ENCODE measurements at regions of chr19 and their contacts with region 1.

Region 1: GRCh38 chr19:18192673-18193387 is at the start of gene MPV17L2:
- DNase-seq: peak; percentile 100
- H3K4me3 ChIP-seq: peak within 1 kb of the TSS; percentile 78 to 85 (median 82)
- H3K27ac ChIP-seq: peak within 1 kb of the TSS; percentile 56
- H3K4me1 ChIP-seq: peaks cover 14% of the 10 kb centered on the region
- H3K27me3 ChIP-seq: no peaks in the 10 kb centered on the region
- CTCF ChIP-seq: no peak
- POLR2A ChIP-seq: peak; percentile 66
- total RNA-seq, gene MPV17L2: 13.8 and 16.1 TPM in 2 replicates

Region 2: DNA sequence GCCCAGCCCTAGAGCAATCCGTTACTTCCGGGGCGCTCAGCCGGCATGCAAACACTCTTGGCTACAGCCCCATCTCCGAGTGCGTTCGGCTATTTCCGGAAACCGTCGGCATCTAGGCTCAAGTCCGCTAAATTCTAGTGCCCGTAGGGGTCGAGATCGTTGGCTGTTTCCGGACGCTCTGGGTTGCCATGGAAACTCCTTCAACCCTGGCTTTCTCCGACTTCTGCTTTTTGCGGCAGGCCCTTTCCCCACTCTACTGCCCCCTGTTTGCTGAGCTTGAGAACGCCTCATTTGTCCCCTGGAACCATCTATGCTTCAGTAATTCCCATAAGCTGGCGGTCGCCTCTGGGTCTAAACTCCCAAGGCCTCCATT is 40.4 kb before region 1 on chr19:
- CTCF ChIA-PET with region 1: no interaction called
- POLR2A ChIA-PET with region 1: no interaction called
- dilution Hi-C with region 1: no loop called
- intact Hi-C with region 1: loop called (anchors 2 kb)
- DNase-seq: peak; percentile 97
- H3K4me3 ChIP-seq: peak overlapping the region in 2 of 3 experiments; percentile 38 to 68
- H3K27ac ChIP-seq: peak overlapping the region; percentile 88
- H3K4me1 ChIP-seq: peaks cover 21% of the 10 kb centered on the region
- H3K27me3 ChIP-seq: no peaks in the 10 kb centered on the region
- CTCF ChIP-seq: peak; percentile 70 to 83
- POLR2A ChIP-seq: peak; percentile 84

Region 3: DNA sequence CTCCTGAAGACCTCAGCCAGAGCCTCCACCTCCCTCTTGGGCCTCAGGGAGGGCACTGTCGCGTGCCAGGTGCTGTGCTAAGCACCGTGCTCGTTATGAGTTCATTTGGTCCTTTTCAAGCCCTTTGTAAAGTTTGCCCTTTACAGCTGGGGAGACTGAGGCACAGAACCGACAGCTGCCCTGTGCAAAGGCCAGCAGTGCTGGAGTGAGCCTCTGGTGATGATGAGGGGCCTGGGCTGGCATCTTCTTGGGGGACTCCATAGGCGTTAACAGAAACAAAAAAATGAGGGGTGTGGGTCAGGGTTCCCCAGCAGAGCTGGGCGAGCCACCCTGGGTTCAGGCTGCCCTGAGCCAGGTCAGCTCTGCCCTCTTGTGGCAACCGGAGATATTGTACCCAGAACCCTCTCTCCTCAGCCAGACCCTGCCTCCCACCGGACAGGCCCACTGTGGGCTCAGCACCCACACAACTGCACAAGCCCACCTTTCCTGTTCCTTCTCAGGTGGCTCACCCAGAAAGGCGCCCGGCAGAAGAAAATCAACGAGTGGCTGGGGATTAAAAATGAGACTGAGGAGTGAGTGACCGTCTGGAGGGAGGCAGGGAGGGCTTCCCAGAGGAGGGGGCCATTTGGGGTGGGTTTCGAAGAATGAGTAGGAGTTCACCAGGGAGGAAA is 24.7 kb before region 1 on chr19:
- CTCF ChIA-PET with region 1: interaction called, 10 read pairs
- POLR2A ChIA-PET with region 1: no interaction called
- dilution Hi-C with region 1: no loop called
- intact Hi-C with region 1: no loop called
- DNase-seq: peak; percentile 24
- H3K4me3 ChIP-seq: no peak overlapping the region
- H3K27ac ChIP-seq: no peak overlapping the region
- H3K4me1 ChIP-seq: no peaks in the 10 kb centered on the region
- H3K27me3 ChIP-seq: no peaks in the 10 kb centered on the region
- CTCF ChIP-seq: peak; percentile 63 to 84
- POLR2A ChIP-seq: no peak

Region 4: DNA sequence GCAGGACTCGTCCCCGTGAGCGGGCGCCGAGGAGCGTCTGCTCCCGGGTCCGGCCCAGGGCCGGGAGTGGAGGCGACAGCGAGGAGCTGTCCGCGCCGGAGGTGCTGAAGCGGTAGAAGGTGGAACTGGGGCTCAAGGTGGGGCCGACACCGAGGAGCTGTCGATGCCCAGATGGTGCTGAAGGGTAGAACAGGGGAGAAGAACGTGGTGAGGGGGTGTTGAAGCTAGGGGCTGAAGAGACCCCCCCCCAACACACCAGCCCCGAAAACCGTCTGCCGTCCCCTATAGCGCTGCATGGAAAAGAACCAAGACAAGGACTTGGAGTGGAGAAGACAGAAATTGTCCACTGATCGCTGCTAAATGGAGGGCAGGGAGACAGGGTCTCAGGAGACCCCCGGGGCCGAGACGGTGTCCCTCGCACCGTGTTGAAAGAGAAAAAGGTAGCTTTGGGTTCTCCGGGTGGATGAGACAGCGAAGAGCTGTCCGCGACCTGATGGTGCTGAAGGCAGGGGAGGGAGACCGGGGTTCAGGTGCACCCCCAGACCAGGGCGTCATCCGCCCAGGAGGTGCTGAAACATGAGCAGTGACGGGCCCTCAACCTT is 40.5 kb after region 1 on chr19:
- CTCF ChIA-PET with region 1: interaction called, 15 read pairs
- POLR2A ChIA-PET with region 1: no interaction called
- dilution Hi-C with region 1: no loop called
- intact Hi-C with region 1: no loop called
- DNase-seq: peak; percentile 34
- H3K4me3 ChIP-seq: no peak overlapping the region
- H3K27ac ChIP-seq: no peak overlapping the region
- H3K4me1 ChIP-seq: no peaks in the 10 kb centered on the region
- H3K27me3 ChIP-seq: peaks cover 0 to 6% of the 10 kb centered on the region in 2 experiments
- CTCF ChIP-seq: no peak
- POLR2A ChIP-seq: no peak

Region 5: GRCh38 chr19:18322759-18323460 is 130.1 kb after region 1 on chr19 and contains the start of gene LSM4:
- CTCF ChIA-PET with region 1: interaction called, 3 read pairs
- POLR2A ChIA-PET with region 1: no interaction called
- dilution Hi-C with region 1: no loop called
- intact Hi-C with region 1: loop called (anchors 1 kb)
- DNase-seq: peak; percentile 98
- H3K4me3 ChIP-seq: peak within 1 kb of the TSS; percentile 43 to 76 (median 71)
- H3K27ac ChIP-seq: peak within 1 kb of the TSS; percentile 73
- H3K4me1 ChIP-seq: peaks cover 50% of the 10 kb centered on the region
- H3K27me3 ChIP-seq: no peaks in the 10 kb centered on the region
- CTCF ChIP-seq: peak; percentile 5 to 38
- POLR2A ChIP-seq: no peak
- total RNA-seq, gene LSM4: 103 and 118 TPM in 2 replicates

Region 6: DNA sequence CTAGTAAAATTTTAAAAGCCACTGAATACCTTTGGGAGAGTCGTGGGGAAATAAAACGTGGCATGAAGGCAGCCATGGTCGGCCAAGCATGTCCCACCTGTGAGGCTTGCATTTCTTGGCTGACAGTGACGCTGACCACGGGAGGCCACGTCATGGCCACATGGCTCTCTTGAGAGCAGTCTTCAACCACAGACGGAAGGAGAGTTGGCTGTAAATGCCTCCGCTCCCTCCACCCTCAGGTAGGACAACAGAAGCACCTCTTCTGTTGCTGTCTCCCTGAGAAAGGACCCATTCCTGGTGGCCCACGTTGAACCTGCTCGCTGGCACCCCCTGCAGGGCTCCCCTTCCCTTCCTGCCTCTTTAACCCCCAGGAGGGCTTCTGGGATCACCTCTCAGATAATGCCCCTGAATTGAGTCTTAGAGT is 215.2 kb after region 1 on chr19:
- CTCF ChIA-PET with region 1: interaction called, 15 read pairs
- POLR2A ChIA-PET with region 1: no interaction called
- dilution Hi-C with region 1: no loop called
- intact Hi-C with region 1: no loop called
- DNase-seq: no peak
- H3K4me3 ChIP-seq: no peak overlapping the region
- H3K27ac ChIP-seq: no peak overlapping the region
- H3K4me1 ChIP-seq: no peaks in the 10 kb centered on the region
- H3K27me3 ChIP-seq: no peaks in the 10 kb centered on the region
- CTCF ChIP-seq: peak; percentile 55 to 69
- POLR2A ChIP-seq: no peak

Region 7: DNA sequence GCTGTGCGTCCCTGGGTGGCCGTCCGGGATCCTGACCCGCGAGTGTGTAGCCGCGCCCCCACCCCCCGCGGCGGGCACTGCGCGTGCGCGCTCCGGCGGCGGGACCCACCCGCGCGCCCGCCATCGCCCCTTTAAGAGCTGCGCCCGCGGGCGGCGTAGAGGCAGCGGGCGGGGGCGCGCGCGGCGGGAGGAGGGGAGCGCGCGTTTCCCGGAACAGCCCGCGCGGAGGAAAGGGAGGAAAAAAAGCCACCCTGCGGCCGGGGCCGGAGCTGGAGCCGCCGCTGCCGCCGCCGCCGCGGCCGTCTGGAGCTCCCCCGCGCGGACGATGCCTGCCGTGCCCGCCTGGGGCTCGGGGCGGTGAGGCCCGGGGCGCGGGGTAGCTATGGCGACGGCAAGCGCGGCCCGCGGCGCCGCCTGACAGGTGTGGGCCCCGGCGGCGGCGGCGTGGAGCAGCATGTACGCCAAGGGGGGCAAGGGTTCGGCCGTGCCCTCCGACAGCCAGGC is 226.4 kb after region 1 on chr19 and contains the start of gene SSBP4:
- CTCF ChIA-PET with region 1: interaction called, 3 read pairs
- POLR2A ChIA-PET with region 1: no interaction called
- dilution Hi-C with region 1: no loop called
- intact Hi-C with region 1: loop called (anchors 2 kb)
- DNase-seq: peak; percentile 76
- H3K4me3 ChIP-seq: peak within 1 kb of the TSS; percentile 50 to 73 (median 53)
- H3K27ac ChIP-seq: peak within 1 kb of the TSS; percentile 54
- H3K4me1 ChIP-seq: peaks cover 46% of the 10 kb centered on the region
- H3K27me3 ChIP-seq: no peaks in the 10 kb centered on the region
- CTCF ChIP-seq: peak; percentile 19 to 31
- POLR2A ChIP-seq: peak; percentile 49
- total RNA-seq, gene SSBP4: 140 and 151 TPM in 2 replicates

Region 8: DNA sequence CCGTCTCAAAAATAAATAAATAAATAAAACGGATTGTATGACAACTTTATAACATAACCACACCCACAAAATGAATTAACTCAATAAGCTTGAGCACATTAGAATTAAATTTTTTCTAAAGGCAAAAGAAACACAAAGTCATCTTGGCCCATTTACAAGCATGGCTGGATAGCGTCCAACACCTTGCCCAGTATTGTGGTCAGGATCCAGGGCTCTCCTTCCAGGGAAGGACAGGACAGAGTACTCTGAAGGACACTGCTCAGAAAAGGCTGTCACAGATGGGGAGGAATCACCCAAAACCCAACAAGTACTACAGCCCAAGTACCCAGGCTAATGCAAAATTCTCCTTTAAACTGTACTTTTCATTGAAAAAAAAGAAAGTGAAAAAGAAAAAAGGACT is 813.4 kb after region 1 on chr19:
- CTCF ChIA-PET with region 1: no interaction called
- POLR2A ChIA-PET with region 1: no interaction called
- dilution Hi-C with region 1: no loop called
- intact Hi-C with region 1: no loop called
- DNase-seq: no peak
- H3K4me3 ChIP-seq: no peak overlapping the region
- H3K27ac ChIP-seq: no peak overlapping the region
- H3K4me1 ChIP-seq: no peaks in the 10 kb centered on the region
- H3K27me3 ChIP-seq: no peaks in the 10 kb centered on the region
- CTCF ChIP-seq: no peak
- POLR2A ChIP-seq: no peak